ENCODE measurements at regions of chr7 and their contacts with region 1.

Region 1: DNA sequence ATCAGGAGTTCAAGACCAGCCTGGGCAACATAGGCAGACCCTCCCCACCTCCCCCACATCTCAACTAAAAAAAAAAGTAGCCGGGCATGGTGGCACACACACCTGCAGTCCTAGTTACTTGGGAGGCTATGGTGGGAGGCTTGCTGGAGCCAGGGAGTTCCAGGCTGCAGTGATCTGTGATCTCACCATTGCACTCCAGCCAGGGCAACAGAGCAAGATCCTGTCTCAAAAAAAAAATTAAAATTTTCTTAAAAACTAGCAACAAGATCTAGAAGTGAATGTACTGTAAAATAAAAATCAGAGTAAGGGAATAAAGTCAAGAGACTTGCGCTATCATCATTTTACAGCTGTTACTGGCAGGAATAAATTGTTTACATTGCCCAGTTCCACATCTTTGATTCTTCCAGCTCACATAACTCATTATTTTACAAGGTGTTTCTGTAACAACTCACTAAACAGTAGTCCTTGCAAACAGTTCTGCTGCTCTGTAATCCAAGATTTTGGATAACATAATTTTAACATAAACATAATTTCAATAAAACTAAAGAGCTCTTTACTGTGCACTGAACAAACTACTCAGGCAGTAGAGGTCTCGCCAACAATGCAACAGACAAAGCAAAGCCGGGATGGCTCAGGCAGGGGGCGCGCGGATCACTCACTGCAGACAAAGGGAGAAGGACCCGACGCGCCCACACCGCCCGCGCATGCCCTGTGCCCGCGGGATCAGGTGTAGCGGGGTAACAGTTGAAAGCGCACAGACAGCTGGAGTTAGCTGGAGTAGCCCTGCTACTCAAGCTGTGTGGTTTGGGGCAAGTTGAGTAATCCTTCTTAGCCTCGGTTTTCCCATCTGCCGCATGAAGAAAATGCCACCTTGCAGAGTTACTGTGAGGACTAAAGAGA is 73.3 kb upstream of the NFE2L3 start:
- DNase-seq: peak; percentile 69 to 89 (median 80)
- ATAC-seq: peak; percentile 100
- H3K4me3 ChIP-seq: no peak overlapping the region
- H3K4me3 Mint-ChIP-seq: no peak overlapping the region
- H3K27ac ChIP-seq: no peak overlapping the region
- H3K27ac Mint-ChIP-seq: no peak overlapping the region
- H3K4me1 ChIP-seq: peaks cover 4% of the 10 kb centered on the region
- H3K4me1 Mint-ChIP-seq: peaks cover 11% of the 10 kb centered on the region
- H3K27me3 ChIP-seq: peaks cover 5 to 26% of the 10 kb centered on the region in 2 experiments
- H3K27me3 Mint-ChIP-seq: peaks cover 48% of the 10 kb centered on the region
- CTCF ChIP-seq: peak; percentile 80

Region 2: GRCh38 chr7:25989140-25989705 is 89.5 kb before region 1 on chr7:
- CTCF ChIA-PET with region 1: no interaction called
- POLR2A ChIA-PET with region 1: no interaction called
- intact Hi-C with region 1: no loop called
- DNase-seq: no peak
- ATAC-seq: no peak
- H3K4me3 ChIP-seq: no peak overlapping the region
- H3K4me3 Mint-ChIP-seq: no peak overlapping the region
- H3K27ac ChIP-seq: no peak overlapping the region
- H3K27ac Mint-ChIP-seq: no peak overlapping the region
- H3K4me1 ChIP-seq: no peaks in the 10 kb centered on the region
- H3K4me1 Mint-ChIP-seq: no peaks in the 10 kb centered on the region
- H3K27me3 ChIP-seq: peaks cover 0 to 4% of the 10 kb centered on the region in 2 experiments
- H3K27me3 Mint-ChIP-seq: peaks cover 24% of the 10 kb centered on the region
- CTCF ChIP-seq: no peak

Region 3: DNA sequence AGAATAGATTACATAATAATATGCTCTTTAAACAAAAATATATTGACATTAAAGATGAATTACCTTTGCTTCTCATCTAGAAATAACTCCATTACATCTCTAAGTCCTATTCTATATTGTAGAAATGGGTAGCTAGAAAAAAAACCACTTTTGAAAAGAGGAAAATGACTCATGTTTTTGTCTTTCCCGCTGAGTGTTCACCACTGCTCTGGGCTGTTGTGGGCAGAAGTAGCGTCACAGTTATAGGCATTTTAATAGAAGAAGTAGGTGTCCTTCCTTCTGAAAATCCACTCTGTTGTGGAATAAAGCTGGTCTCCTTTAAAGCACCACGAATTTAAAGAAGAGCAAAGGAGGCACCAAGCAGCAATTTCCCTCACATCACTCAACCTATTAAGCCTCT is 44.3 kb before region 1 on chr7:
- CTCF ChIA-PET with region 1: no interaction called
- POLR2A ChIA-PET with region 1: no interaction called
- intact Hi-C with region 1: no loop called
- DNase-seq: no peak
- ATAC-seq: no peak
- H3K4me3 ChIP-seq: no peak overlapping the region
- H3K4me3 Mint-ChIP-seq: no peak overlapping the region
- H3K27ac ChIP-seq: no peak overlapping the region
- H3K27ac Mint-ChIP-seq: no peak overlapping the region
- H3K4me1 ChIP-seq: no peaks in the 10 kb centered on the region
- H3K4me1 Mint-ChIP-seq: peaks cover 8% of the 10 kb centered on the region
- H3K27me3 ChIP-seq: peaks cover 2 to 5% of the 10 kb centered on the region in 2 experiments
- H3K27me3 Mint-ChIP-seq: peaks cover 26% of the 10 kb centered on the region
- CTCF ChIP-seq: no peak

Region 4: DNA sequence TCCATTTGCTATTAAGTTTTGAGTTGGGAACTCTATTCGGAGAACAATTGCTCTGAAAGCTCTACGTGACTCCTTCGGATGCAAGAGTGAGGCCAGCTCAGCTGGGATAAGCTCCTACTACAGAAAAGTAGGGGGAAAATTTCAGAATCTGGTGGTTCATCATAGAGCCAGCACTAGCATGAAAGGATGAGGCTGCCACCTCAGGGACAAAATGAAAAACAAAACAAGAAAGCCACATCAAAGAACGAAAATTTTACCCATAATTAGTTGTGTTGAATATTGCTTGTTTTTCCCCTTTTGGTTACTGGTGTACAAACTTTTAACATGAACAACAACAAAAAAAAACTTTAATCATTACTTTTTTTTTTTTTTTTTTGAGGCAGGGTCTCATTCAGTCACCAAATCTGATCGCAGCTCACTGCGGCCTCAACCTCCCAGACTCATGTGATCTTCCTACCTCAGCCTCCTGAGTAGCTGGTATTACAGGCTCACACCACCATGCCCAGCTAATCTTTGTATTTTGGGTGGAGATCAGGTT is 33.6 kb after region 1 on chr7:
- CTCF ChIA-PET with region 1: interaction called, 12 read pairs
- POLR2A ChIA-PET with region 1: interaction called, 3 read pairs
- intact Hi-C with region 1: no loop called
- DNase-seq: peak in 3 of 14 experiments; percentile 48 to 52 (median 50)
- ATAC-seq: no peak
- H3K4me3 ChIP-seq: no peak overlapping the region
- H3K4me3 Mint-ChIP-seq: no peak overlapping the region
- H3K27ac ChIP-seq: no peak overlapping the region
- H3K27ac Mint-ChIP-seq: no peak overlapping the region
- H3K4me1 ChIP-seq: peaks cover 8% of the 10 kb centered on the region
- H3K4me1 Mint-ChIP-seq: peaks cover 13% of the 10 kb centered on the region
- H3K27me3 ChIP-seq: no peaks in the 10 kb centered on the region
- H3K27me3 Mint-ChIP-seq: no peaks in the 10 kb centered on the region
- CTCF ChIP-seq: no peak

Region 5: DNA sequence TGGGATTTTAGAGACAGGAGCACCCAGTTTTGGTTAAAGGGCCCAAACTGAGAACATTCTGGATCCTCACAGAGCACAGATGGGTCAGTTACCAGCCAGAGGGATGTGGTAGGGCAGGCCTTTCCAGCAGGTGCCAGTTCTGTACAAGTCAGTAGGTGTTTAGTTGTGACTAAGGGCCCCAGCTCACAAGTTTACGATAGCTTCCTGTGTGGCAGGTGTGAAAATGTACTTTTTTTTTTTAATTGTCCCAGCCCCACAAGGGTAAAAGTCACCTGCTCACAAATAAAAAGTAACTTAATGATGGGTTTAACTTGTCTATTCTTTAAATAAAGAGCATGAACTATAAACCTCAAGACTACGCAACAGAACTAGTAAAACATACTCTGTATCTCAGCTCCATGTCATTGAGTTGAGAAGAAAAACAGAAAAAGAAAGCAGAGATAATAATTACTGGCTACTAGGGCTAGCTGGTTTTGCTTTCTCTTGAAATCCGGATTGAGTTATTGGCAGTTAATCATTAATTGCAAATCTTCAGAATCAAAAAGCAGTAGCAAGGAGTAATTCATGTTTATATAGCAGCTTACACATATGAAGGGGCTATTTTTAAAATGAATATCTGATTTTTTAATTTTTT is 88.7 kb after region 1 on chr7:
- CTCF ChIA-PET with region 1: no interaction called
- POLR2A ChIA-PET with region 1: no interaction called
- intact Hi-C with region 1: no loop called
- DNase-seq: peak in 4 of 14 experiments; percentile 36 to 79 (median 67)
- ATAC-seq: peak; percentile 46
- H3K4me3 ChIP-seq: no peak overlapping the region
- H3K4me3 Mint-ChIP-seq: no peak overlapping the region
- H3K27ac ChIP-seq: peak overlapping the region in 1 of 2 donors; percentile 39
- H3K27ac Mint-ChIP-seq: peak overlapping the region; percentile 30
- H3K4me1 ChIP-seq: peaks cover 20% of the 10 kb centered on the region
- H3K4me1 Mint-ChIP-seq: peaks cover 20% of the 10 kb centered on the region
- H3K27me3 ChIP-seq: no peaks in the 10 kb centered on the region
- H3K27me3 Mint-ChIP-seq: no peaks in the 10 kb centered on the region
- CTCF ChIP-seq: no peak

Region 6: DNA sequence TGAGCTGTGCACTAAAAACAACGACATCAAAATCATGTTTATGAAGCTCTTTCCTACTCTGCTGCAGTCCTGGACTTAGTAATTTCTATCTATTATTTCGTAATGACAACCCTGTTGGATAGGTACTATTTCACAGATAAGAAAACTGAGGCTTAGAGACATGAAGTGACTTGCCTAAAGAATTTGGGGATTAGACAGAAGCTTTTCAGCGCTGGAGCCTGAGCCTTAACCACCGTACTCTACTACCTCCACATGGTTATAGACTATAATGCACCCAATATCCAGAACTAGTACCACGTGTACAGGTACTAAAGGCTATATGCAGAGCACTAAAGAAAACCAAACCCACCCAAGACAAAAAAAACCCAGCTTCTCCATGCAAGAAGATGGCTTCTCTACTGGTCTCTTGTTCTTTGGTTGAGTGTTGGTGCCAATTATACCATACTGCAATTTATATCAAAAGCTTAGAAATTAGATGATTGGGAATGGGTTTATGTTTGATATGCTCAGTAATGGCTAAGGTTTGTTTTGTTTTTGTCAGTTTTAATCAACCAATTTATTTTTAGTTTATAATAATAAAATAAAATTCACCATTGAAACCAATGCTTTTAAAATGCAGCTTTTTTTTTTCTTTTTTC is 206.4 kb after region 1 on chr7:
- CTCF ChIA-PET with region 1: interaction called, 4 read pairs
- POLR2A ChIA-PET with region 1: interaction called, 3 read pairs
- intact Hi-C with region 1: loop called in 1 of 2 experiments (anchors 5 kb)
- DNase-seq: peak in 3 of 14 experiments; percentile 38 to 52 (median 47)
- ATAC-seq: peak; percentile 98
- H3K4me3 ChIP-seq: no peak overlapping the region
- H3K4me3 Mint-ChIP-seq: no peak overlapping the region
- H3K27ac ChIP-seq: no peak overlapping the region
- H3K27ac Mint-ChIP-seq: no peak overlapping the region
- H3K4me1 ChIP-seq: peaks cover under 1% of the 10 kb centered on the region
- H3K4me1 Mint-ChIP-seq: peaks cover 6% of the 10 kb centered on the region
- H3K27me3 ChIP-seq: no peaks in the 10 kb centered on the region
- H3K27me3 Mint-ChIP-seq: no peaks in the 10 kb centered on the region
- CTCF ChIP-seq: peak; percentile 12

Region 7: GRCh38 chr7:26667500-26668133 is 588.9 kb after region 1 on chr7:
- CTCF ChIA-PET with region 1: no interaction called
- POLR2A ChIA-PET with region 1: no interaction called
- intact Hi-C with region 1: loop called (anchors 1 to 5 kb)
- DNase-seq: peak in 12 of 14 experiments; percentile 15 to 82 (median 30)
- ATAC-seq: peak; percentile 61
- H3K4me3 ChIP-seq: no peak overlapping the region
- H3K4me3 Mint-ChIP-seq: no peak overlapping the region
- H3K27ac ChIP-seq: no peak overlapping the region
- H3K27ac Mint-ChIP-seq: no peak overlapping the region
- H3K4me1 ChIP-seq: no peaks in the 10 kb centered on the region
- H3K4me1 Mint-ChIP-seq: peaks cover 19% of the 10 kb centered on the region
- H3K27me3 ChIP-seq: no peaks in the 10 kb centered on the region
- H3K27me3 Mint-ChIP-seq: peaks cover 15% of the 10 kb centered on the region
- CTCF ChIP-seq: peak; percentile 75

Region 8: GRCh38 chr7:27527348-27527714 is 1448.6 kb after region 1 on chr7:
- CTCF ChIA-PET with region 1: no interaction called
- POLR2A ChIA-PET with region 1: no interaction called
- intact Hi-C with region 1: no loop called
- DNase-seq: no peak
- ATAC-seq: no peak
- H3K4me3 ChIP-seq: no peak overlapping the region
- H3K4me3 Mint-ChIP-seq: no peak overlapping the region
- H3K27ac ChIP-seq: no peak overlapping the region
- H3K27ac Mint-ChIP-seq: no peak overlapping the region
- H3K4me1 ChIP-seq: no peaks in the 10 kb centered on the region
- H3K4me1 Mint-ChIP-seq: no peaks in the 10 kb centered on the region
- H3K27me3 ChIP-seq: no peaks in the 10 kb centered on the region
- H3K27me3 Mint-ChIP-seq: no peaks in the 10 kb centered on the region
- CTCF ChIP-seq: no peak